Activated T-helper 1 cell treated with anti-CD3 and anti-CD28 coated beads, Interleukin-12 subunit alpha, Interleukin-12 subunit beta, Interleukin-2, Interleukin-4 antibody, amounts not matched to agents 30 ng/mL and 10 ng/mL and 1 ng/mL, durations not matched to agents 14 hours and 24 hours and 36 hours (primary cell): ENCODE measurements at regions of chr2 and their contacts with region 1.

Region 1: DNA sequence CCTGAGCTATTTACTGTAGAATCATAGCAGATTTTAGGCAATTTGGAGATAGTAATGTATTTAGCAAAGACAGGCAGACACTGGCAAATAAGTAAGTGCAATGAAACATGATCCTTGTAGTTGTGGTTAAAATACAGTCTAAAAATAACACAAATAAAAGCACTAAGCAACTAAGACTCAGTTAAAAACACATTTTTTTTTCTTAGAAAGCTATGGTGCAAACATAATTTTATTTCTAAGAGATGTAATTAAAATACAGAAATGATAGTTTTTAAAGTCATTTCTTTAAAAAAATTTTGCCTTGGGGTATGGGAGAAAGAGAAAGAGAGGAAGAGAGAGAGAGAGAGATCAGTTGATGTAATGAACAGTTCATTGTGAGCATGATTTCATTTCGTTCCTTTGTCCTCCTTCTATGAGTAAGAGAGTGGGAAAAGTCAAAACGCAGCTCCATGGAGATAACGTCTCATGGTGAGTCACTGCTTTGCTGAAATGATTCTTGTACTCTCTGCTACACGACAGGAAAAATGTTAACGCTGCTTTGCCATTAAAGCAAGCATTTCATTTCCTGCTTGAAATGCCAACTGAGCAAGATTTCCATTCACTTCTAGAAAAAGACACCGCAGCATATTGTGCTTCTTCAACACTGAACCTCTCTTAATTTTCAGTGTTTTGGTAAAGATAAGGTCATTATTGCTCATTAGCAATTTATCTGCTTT is 61.3 kb upstream of the PGAP1 start:
- DNase-seq: peak; percentile 46
- H3K4me3 Mint-ChIP-seq: peak overlapping the region; percentile 66
- H3K27ac Mint-ChIP-seq: peak overlapping the region; percentile 94
- H3K4me1 Mint-ChIP-seq: peaks cover 62% of the 10 kb centered on the region
- H3K27me3 Mint-ChIP-seq: no peaks in the 10 kb centered on the region

Region 2: DNA sequence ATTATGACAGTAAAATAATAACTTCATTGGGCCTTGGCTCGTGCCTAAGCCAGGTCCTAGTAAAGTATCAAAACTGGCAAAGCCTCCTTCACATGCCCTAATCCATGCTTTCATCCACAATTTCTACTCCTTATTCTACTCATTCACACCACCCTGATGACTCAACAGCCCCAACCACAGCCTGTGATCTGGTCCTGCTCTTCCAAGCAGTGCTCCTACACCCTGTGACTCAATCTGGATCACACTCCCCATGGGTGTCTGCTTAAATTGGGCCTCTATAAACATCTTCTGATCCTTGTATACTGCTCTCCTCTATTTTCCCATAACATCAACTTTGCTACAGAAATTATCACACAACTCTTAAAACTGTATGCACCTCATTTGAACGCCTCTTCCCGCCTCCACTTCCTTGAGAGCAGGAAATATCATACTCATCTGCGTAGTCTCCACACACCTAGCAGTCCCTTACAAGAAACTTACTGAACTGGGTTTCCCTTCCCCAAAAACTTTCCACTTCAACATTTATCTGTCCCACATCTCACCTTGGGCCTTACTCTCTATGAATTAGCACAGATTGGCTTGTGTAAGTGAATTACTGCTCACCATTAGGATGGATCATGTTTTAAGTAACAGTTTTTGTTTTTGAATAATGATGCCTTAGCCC is 204.2 kb before region 1 on chr2:
- intact Hi-C with region 1: loop called (anchors 1 kb)
- DNase-seq: no peak
- H3K4me3 Mint-ChIP-seq: peak overlapping the region; percentile 12
- H3K27ac Mint-ChIP-seq: peak overlapping the region; percentile 80
- H3K4me1 Mint-ChIP-seq: peaks cover 22% of the 10 kb centered on the region
- H3K27me3 Mint-ChIP-seq: no peaks in the 10 kb centered on the region

Region 3: GRCh38 chr2:196839574-196839973 is 148.2 kb before region 1 on chr2:
- intact Hi-C with region 1: loop called (anchors 2 kb)
- DNase-seq: no peak
- H3K4me3 Mint-ChIP-seq: no peak overlapping the region
- H3K27ac Mint-ChIP-seq: no peak overlapping the region
- H3K4me1 Mint-ChIP-seq: no peaks in the 10 kb centered on the region
- H3K27me3 Mint-ChIP-seq: no peaks in the 10 kb centered on the region

Region 4: GRCh38 chr2:196970099-196970498 is 17.7 kb before region 1 on chr2:
- intact Hi-C with region 1: loop called (anchors 1 kb)
- DNase-seq: no peak
- H3K4me3 Mint-ChIP-seq: no peak overlapping the region
- H3K27ac Mint-ChIP-seq: no peak overlapping the region
- H3K4me1 Mint-ChIP-seq: peaks cover 25% of the 10 kb centered on the region
- H3K27me3 Mint-ChIP-seq: no peaks in the 10 kb centered on the region